Ascending aorta (tissue), 2 donors: ENCODE measurements at regions of chr3 and their contacts with region 1.

Region 1: GRCh38 chr3:136861890-136862616 is at the start of gene NCK1:
- DNase-seq: peak; percentile 97 to 99
- H3K4me3 ChIP-seq: peak within 1 kb of the TSS; percentile 78 to 85
- H3K27ac ChIP-seq: peak within 1 kb of the TSS; percentile 91 to 92
- H3K4me1 ChIP-seq: peaks cover 0 to 9% of the 10 kb centered on the region in 2 donors
- H3K27me3 ChIP-seq: no peaks in the 10 kb centered on the region
- CTCF ChIP-seq: peak in 2 of 3 experiments; percentile 14 to 17
- total RNA-seq, gene NCK1: 45.6 TPM

Region 2: DNA sequence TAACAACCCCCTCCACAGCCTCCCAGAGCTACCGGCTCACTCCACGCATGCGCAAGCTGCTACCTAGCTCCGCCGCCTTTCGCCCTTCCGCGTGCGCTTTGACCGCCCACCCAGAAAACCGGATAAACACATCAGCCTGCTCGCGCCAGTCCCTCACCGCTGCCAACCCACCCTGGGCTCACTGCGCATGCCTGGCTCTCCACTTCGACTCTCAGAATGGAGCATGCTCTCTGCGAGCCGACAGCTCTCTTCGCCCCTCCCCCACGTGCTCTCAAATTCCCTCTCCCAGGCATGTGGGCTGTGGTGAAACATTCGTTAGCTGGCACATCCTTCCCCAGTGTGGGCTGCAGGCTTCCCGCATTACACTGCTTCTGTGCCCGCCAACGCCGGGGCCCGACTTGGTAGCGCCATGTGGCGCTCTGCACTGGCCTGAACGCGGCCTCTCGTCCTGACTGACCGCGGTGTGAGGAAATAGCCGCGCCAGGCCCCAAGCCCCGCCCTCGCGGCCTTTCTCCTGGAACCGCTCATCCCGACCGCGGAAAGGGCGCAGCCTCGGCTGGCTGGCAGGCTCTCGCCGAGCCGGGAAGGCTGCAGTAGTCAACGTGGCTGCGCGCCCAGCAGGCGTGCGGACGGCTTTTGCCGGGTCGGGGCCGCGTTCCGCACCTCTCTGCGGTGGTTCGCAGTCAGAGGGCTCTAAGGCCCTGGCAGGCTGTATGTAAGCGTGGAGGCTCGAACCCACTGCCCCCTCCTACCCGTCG is 665.5 kb before region 1 on chr3:
- intact Hi-C with region 1: loop called (anchors 1 kb)
- DNase-seq: peak; percentile 96 to 99
- H3K4me3 ChIP-seq: peak overlapping the region; percentile 69 to 93
- H3K27ac ChIP-seq: peak overlapping the region; percentile 99 to 100
- H3K4me1 ChIP-seq: peaks cover 3 to 18% of the 10 kb centered on the region in 2 donors
- H3K27me3 ChIP-seq: no peaks in the 10 kb centered on the region
- CTCF ChIP-seq: no peak

Region 3: GRCh38 chr3:136250226-136250902 is 611.7 kb before region 1 on chr3 and contains the start of gene PCCB:
- intact Hi-C with region 1: loop called (anchors 10 kb)
- DNase-seq: peak; percentile 65 to 96
- H3K4me3 ChIP-seq: peak within 1 kb of the TSS; percentile 60 to 81
- H3K27ac ChIP-seq: peak within 1 kb of the TSS; percentile 80 to 90
- H3K4me1 ChIP-seq: peaks cover 0 to 3% of the 10 kb centered on the region in 2 donors
- H3K27me3 ChIP-seq: no peaks in the 10 kb centered on the region
- CTCF ChIP-seq: peak; percentile 81 to 92 (median 85)
- total RNA-seq, gene PCCB: 114 TPM

Region 4: DNA sequence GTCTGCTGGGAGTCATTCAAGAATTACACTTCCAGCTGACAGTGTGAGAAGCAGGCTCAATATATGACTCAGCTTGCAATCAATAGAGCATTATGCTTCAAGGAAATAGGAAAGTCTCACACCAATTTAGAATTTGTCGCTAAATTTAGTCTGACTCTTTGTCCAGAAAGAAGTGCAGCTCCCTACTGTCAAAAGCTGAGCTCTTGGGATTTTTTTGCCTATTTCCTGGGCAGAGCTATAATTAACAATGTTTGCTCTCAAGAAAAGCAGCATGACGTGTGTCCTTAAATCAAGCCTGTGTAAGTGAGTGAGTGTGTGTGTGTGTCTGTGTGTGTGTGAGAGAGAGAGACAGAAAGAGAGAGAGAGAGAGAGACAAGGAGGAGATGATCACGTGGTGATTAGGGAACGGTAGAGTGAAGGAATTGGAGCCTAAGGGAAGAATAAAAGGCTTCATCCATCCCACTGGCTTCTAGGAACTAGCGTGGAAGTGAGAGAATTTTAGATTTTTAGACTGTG is 59.5 kb before region 1 on chr3:
- intact Hi-C with region 1: loop called (anchors 2 kb)
- DNase-seq: peak in 1 of 2 donors; percentile 74
- H3K4me3 ChIP-seq: peak overlapping the region in 1 of 2 donors; percentile 31
- H3K27ac ChIP-seq: peak overlapping the region; percentile 62 to 79
- H3K4me1 ChIP-seq: peaks cover 0 to 6% of the 10 kb centered on the region in 2 donors
- H3K27me3 ChIP-seq: no peaks in the 10 kb centered on the region
- CTCF ChIP-seq: no peak

Region 5: DNA sequence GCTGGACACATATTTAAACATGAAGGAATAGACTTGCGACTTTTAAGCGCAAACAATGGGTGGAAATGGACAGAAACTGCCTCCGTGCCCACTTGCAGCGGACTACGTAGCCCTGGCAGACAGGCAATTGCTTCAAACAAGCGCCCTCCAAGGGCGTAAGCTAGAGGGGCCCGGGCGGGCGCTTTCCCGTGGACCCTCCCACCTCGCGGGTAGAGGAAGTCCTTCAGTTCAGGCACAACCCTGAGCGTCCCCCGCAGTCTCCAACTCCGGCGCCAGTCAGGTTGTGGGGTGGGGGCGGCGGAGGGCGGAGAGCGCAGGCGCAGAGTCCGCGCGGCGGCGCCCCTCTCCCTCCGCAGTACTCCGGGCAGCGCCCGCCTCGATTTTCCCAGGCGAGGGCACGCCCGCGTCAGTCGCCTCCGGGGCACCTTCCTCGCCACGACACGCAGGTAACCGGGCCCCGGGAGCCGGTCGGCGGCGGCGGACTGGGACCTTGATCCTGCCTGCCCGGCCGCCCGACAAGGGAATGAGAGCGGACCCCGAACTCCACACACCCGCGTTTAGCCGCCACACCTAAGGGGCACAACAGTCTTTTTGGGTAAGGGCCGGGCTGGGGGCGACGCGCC is 43.2 kb before region 1 on chr3 and contains the start of gene SLC35G2:
- intact Hi-C with region 1: loop called (anchors 1 kb)
- DNase-seq: peak; percentile 10 to 76
- H3K4me3 ChIP-seq: peak within 1 kb of the TSS; percentile 72 to 88
- H3K27ac ChIP-seq: peak within 1 kb of the TSS; percentile 63 to 84
- H3K4me1 ChIP-seq: peaks cover 2 to 6% of the 10 kb centered on the region in 2 donors
- H3K27me3 ChIP-seq: no peaks in the 10 kb centered on the region
- CTCF ChIP-seq: peak in 1 of 3 experiments; percentile 13
- total RNA-seq, gene SLC35G2: 10.0 TPM

Region 6: GRCh38 chr3:136844724-136845123 is 17.3 kb before region 1 on chr3:
- intact Hi-C with region 1: no loop called
- DNase-seq: no peak
- H3K4me3 ChIP-seq: no peak overlapping the region
- H3K27ac ChIP-seq: no peak overlapping the region
- H3K4me1 ChIP-seq: peaks cover 0 to under 1% of the 10 kb centered on the region in 2 donors
- H3K27me3 ChIP-seq: no peaks in the 10 kb centered on the region
- CTCF ChIP-seq: no peak

Region 7: GRCh38 chr3:136994772-136995516 is 132.9 kb after region 1 on chr3:
- intact Hi-C with region 1: loop called (anchors 1 kb)
- DNase-seq: peak; percentile 83 to 95
- H3K4me3 ChIP-seq: peak overlapping the region in 1 of 2 donors; percentile 3
- H3K27ac ChIP-seq: peak overlapping the region; percentile 77 to 85
- H3K4me1 ChIP-seq: peaks cover 0 to 17% of the 10 kb centered on the region in 2 donors
- H3K27me3 ChIP-seq: no peaks in the 10 kb centered on the region
- CTCF ChIP-seq: no peak